ENCODE measurements at regions of chr5 and their contacts with region 1.

Region 1: DNA sequence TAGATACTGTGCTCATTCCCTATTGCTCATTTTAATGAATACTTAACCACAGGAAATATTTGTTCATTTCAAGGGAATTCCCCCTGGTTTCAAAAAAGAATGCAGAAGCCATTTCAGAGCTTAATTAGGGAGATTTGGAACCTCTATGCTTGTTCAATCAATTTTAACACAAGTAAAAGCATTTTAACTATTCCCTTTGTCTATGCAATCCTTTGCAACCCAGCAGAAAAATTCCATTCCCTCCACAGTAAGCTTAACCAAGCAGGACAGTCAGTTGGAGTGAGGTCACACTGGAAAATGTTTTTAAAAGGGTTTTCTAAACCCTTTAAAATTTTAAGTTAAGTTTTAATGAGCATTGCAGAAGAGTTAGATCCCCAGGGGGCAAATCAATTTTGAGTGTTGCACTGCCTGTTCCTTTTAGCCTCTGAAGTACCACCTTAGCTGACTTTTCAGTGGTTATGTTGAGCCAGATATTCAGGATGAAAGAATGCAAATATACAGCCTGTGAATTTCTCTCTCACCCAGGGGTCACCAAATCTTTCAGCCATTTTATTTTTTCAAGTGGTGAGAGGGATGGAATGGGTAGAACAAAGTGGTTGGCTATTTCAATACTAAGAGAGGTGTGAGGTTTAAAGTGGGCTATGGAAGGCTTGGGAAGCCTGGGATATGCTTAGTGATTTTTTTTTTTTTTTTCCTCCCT is 356.2 kb upstream of the NUDT12 start:
- DNase-seq: no peak
- H3K4me3 ChIP-seq: no peak overlapping the region
- H3K27ac ChIP-seq: no peak overlapping the region
- H3K4me1 ChIP-seq: no peaks in the 10 kb centered on the region
- H3K27me3 ChIP-seq: no peaks in the 10 kb centered on the region
- CTCF ChIP-seq: no peak

Region 2: GRCh38 chr5:103890313-103890712 is 28.5 kb before region 1 on chr5:
- CTCF ChIA-PET with region 1: no interaction called
- POLR2A ChIA-PET with region 1: interaction called, 11 read pairs
- intact Hi-C with region 1: no loop called
- DNase-seq: no peak
- H3K4me3 ChIP-seq: no peak overlapping the region
- H3K27ac ChIP-seq: no peak overlapping the region
- H3K4me1 ChIP-seq: no peaks in the 10 kb centered on the region
- H3K27me3 ChIP-seq: no peaks in the 10 kb centered on the region
- CTCF ChIP-seq: no peak

Region 3: GRCh38 chr5:104186100-104186499 is 267.3 kb after region 1 on chr5:
- CTCF ChIA-PET with region 1: no interaction called
- POLR2A ChIA-PET with region 1: no interaction called
- intact Hi-C with region 1: no loop called
- DNase-seq: no peak
- H3K4me3 ChIP-seq: no peak overlapping the region
- H3K27ac ChIP-seq: no peak overlapping the region
- H3K4me1 ChIP-seq: no peaks in the 10 kb centered on the region
- H3K27me3 ChIP-seq: no peaks in the 10 kb centered on the region
- CTCF ChIP-seq: no peak

Region 4: DNA sequence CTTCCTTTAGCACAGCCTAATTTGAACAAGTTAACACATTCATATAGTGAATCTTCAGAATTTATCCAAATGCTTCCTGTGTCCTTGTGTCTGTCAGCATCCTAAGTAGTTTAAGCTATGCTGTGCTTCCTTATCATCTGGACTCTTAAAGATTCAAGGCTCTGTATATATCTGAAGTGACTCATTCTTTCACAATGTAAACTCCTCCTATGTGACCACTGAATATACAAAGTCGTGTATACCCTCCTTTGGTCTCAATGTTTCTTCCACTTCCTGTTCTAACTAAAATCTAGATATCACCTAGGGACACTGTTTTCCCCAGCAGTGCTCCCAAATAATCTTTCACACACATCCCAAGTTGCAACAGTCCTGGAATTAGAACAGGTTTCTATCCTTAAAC is 579.5 kb after region 1 on chr5:
- CTCF ChIA-PET with region 1: no interaction called
- POLR2A ChIA-PET with region 1: no interaction called
- intact Hi-C with region 1: no loop called
- DNase-seq: peak in 1 of 2 experiments; percentile 64
- H3K4me3 ChIP-seq: no peak overlapping the region
- H3K27ac ChIP-seq: peak overlapping the region; percentile 40; the same call in 1 of the 2 replicates
- H3K4me1 ChIP-seq: no peaks in the 10 kb centered on the region; the same call in 1 of the 2 replicates
- H3K27me3 ChIP-seq: no peaks in the 10 kb centered on the region
- CTCF ChIP-seq: no peak

Measured in PC-9 (cell line).